ENCODE measurements at regions of chr12 and their contacts with region 1.

Region 1: DNA sequence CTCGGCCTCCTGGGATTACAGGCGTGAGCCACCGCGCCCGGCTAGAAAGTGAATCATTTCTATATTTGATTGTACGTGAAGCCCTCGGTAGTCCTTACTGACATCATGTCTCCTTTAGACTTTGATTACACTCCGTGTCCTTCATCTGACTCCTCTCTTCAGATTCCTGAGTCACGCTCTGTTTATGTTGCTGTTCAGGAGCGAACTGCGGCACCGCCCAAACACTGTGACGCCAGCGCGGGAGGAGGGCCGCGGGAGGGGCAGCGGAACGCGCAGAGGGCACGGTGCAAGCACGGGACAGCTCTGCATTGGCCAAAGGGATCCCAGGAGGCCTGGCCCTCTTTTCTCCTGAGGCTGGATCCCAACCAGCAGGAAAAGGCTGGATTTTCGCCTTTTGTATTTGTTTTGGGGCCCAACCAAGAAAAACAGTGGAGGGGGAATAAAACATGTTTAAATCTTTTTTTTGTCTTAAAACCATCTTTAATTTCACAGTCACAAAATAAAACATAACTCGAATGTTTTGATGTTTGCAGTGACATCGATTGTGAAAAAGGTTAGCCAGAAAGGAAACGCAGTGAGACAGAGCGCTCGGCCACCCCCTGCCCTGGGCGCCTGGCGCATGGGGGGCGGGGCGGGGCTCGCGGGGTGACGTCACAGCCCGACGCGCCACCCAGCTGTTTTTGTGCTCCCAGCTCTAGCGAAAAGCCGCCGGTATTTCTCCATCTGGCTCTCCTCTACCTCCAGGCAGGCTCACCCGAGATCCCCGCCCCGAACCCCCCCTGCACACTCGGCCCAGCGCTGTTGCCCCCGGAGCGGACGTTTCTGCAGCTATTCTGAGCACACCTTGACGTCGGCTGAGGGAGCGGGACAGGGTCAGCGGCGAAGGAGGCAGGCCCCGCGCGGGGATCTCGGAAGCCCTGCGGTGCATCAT is at the start of gene GABARAPL1:
- DNase-seq: peak; percentile 100
- ATAC-seq: peak; percentile 90
- H3K4me3 ChIP-seq: peak within 1 kb of the TSS; percentile 89
- H3K27ac ChIP-seq: peak within 1 kb of the TSS; percentile 98
- H3K4me1 ChIP-seq: peaks cover 3% of the 10 kb centered on the region; the same call in 1 of the 2 replicates
- H3K27me3 ChIP-seq: no peaks in the 10 kb centered on the region
- CTCF ChIP-seq: no peak
- POLR2A ChIP-seq: peak; percentile 88
- RAD21 ChIP-seq: no peak; the same call in 1 of the 2 replicates
- total RNA-seq, gene GABARAPL1: 51.6 and 63.0 TPM in 2 replicates

Region 2: DNA sequence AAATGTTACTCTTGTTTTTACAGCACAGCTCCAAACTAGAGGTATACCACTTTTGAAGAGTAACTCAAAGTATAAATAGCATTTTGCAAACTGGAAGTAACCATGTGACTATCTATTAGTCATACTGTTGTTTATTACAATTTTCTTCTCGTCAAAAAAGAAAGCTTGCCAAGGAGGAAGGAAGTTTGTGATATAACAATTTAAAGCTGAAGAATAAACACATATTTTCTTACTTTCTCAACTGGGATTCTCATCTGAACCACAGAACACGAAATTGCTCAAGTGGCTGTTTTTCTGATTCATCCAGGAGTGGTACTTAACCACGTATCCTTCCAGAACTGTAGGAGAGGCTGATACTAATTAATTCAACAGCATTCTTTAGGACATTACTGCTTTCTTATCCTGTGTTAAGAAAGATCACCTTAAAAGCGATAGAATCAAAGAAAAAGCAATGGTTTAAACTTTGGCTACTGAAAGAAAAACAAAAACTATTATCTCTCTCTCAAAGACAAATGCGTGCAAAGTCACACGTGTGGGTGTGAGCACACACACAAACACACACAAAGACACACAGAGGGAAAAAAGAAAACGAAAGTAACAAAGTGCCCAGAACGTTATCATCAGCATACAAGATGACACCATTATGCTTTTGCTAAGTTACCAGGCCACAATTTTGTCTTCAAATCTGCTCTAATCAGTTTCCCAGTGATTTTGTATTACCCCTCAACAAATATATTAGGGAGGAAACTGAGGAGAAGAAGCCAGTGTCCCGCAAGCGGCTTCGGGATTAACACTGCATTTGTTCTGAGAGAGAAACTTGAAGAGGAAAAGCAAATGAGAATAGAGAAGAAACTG is 342.9 kb before region 1 on chr12 and contains the start of gene CLEC2B:
- CTCF ChIA-PET with region 1: no interaction called
- POLR2A ChIA-PET with region 1: no interaction called
- dilution Hi-C with region 1: no loop called
- in situ Hi-C with region 1: no loop called
- intact Hi-C with region 1: loop called (anchors 5 kb)
- DNase-seq: peak; percentile 85
- ATAC-seq: peak; percentile 90
- H3K4me3 ChIP-seq: peak within 1 kb of the TSS; percentile 69
- H3K27ac ChIP-seq: peak within 1 kb of the TSS; percentile 85; the same call in 1 of the 2 replicates
- H3K4me1 ChIP-seq: peaks cover 2% of the 10 kb centered on the region; the same call in 1 of the 2 replicates
- H3K27me3 ChIP-seq: no peaks in the 10 kb centered on the region
- CTCF ChIP-seq: no peak
- POLR2A ChIP-seq: no peak
- RAD21 ChIP-seq: no peak
- total RNA-seq, gene CLEC2B: 0.18 and 0.56 TPM in 2 replicates

Region 3: GRCh38 chr12:10033783-10034545 is 178.5 kb before region 1 on chr12:
- CTCF ChIA-PET with region 1: no interaction called
- POLR2A ChIA-PET with region 1: no interaction called
- dilution Hi-C with region 1: no loop called
- in situ Hi-C with region 1: no loop called
- intact Hi-C with region 1: loop called (anchors 1 kb)
- DNase-seq: peak; percentile 18
- ATAC-seq: peak; percentile 50
- H3K4me3 ChIP-seq: no peak overlapping the region
- H3K27ac ChIP-seq: no peak overlapping the region
- H3K4me1 ChIP-seq: no peaks in the 10 kb centered on the region
- H3K27me3 ChIP-seq: no peaks in the 10 kb centered on the region
- CTCF ChIP-seq: peak; percentile 72
- POLR2A ChIP-seq: no peak
- RAD21 ChIP-seq: peak; percentile 72

Region 4: DNA sequence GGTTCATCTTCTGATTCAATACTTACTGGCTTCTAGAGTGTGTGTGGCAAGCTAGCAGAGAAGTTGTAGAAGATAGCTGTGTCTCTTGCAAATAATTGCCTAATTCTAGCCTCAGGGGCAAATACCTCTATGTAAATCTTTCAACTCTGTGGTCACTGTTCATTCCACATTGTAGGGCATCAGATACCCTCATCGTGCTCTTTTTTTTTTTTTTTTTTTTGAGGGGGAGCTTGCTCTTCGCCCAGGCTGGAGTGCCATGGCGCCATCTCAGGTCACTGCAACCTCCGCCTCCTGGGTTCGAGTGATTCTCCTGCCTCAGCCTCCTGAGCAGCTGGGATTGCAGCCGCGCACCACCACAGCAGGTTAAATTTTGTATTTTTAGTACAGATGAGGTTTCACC is 42.2 kb before region 1 on chr12:
- CTCF ChIA-PET with region 1: no interaction called
- POLR2A ChIA-PET with region 1: interaction called, 23 read pairs
- dilution Hi-C with region 1: no loop called
- in situ Hi-C with region 1: no loop called
- intact Hi-C with region 1: no loop called
- DNase-seq: no peak
- ATAC-seq: no peak
- H3K4me3 ChIP-seq: no peak overlapping the region
- H3K27ac ChIP-seq: peak overlapping the region; percentile 52; the same call in 1 of the 2 replicates
- H3K4me1 ChIP-seq: peaks cover 12% of the 10 kb centered on the region
- H3K27me3 ChIP-seq: no peaks in the 10 kb centered on the region
- CTCF ChIP-seq: no peak
- POLR2A ChIP-seq: no peak
- RAD21 ChIP-seq: no peak

Region 5: GRCh38 chr12:10190558-10191388 is 21.7 kb before region 1 on chr12:
- CTCF ChIA-PET with region 1: interaction called, 10 read pairs
- POLR2A ChIA-PET with region 1: interaction called, 10 read pairs
- dilution Hi-C with region 1: no loop called
- in situ Hi-C with region 1: no loop called
- intact Hi-C with region 1: loop called (anchors 1 kb)
- DNase-seq: peak; percentile 77
- ATAC-seq: peak; percentile 87
- H3K4me3 ChIP-seq: no peak overlapping the region
- H3K27ac ChIP-seq: peak overlapping the region; percentile 34; the same call in 1 of the 2 replicates
- H3K4me1 ChIP-seq: peaks cover 12% of the 10 kb centered on the region
- H3K27me3 ChIP-seq: no peaks in the 10 kb centered on the region
- CTCF ChIP-seq: peak; percentile 85
- POLR2A ChIP-seq: no peak
- RAD21 ChIP-seq: peak; percentile 87

Region 6: DNA sequence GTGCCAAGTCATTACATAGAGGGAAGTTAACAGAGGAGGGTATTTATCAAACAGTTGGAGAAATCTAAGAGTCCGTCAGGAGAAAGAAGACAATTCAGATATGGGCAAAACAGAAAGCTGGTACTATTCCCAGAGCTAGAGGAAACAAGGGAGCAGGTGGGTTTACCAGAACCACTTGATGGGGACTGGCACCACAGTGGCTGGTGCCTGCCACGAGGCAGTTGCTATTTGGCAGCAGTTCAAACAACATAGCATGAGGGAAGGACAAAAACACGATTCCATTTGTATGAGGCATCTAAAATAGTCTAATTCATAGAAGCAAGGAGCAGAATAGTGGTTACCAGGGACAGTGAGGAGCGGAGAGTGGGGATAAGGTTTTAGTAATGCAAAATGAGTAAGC is 70.6 kb after region 1 on chr12:
- CTCF ChIA-PET with region 1: no interaction called
- POLR2A ChIA-PET with region 1: no interaction called
- dilution Hi-C with region 1: no loop called
- in situ Hi-C with region 1: no loop called
- intact Hi-C with region 1: no loop called
- DNase-seq: no peak
- ATAC-seq: no peak
- H3K4me3 ChIP-seq: no peak overlapping the region
- H3K27ac ChIP-seq: no peak overlapping the region
- H3K4me1 ChIP-seq: no peaks in the 10 kb centered on the region
- H3K27me3 ChIP-seq: peaks cover 6% of the 10 kb centered on the region; the same call in 1 of the 2 replicates
- CTCF ChIP-seq: no peak
- POLR2A ChIP-seq: no peak
- RAD21 ChIP-seq: no peak

Region 7: GRCh38 chr12:10293570-10294227 is 81.2 kb after region 1 on chr12:
- CTCF ChIA-PET with region 1: no interaction called
- POLR2A ChIA-PET with region 1: no interaction called
- dilution Hi-C with region 1: no loop called
- in situ Hi-C with region 1: no loop called
- intact Hi-C with region 1: no loop called
- DNase-seq: no peak
- ATAC-seq: no peak
- H3K4me3 ChIP-seq: no peak overlapping the region
- H3K27ac ChIP-seq: no peak overlapping the region
- H3K4me1 ChIP-seq: no peaks in the 10 kb centered on the region
- H3K27me3 ChIP-seq: peaks cover 17% of the 10 kb centered on the region
- CTCF ChIP-seq: no peak
- POLR2A ChIP-seq: no peak
- RAD21 ChIP-seq: no peak

Region 8: DNA sequence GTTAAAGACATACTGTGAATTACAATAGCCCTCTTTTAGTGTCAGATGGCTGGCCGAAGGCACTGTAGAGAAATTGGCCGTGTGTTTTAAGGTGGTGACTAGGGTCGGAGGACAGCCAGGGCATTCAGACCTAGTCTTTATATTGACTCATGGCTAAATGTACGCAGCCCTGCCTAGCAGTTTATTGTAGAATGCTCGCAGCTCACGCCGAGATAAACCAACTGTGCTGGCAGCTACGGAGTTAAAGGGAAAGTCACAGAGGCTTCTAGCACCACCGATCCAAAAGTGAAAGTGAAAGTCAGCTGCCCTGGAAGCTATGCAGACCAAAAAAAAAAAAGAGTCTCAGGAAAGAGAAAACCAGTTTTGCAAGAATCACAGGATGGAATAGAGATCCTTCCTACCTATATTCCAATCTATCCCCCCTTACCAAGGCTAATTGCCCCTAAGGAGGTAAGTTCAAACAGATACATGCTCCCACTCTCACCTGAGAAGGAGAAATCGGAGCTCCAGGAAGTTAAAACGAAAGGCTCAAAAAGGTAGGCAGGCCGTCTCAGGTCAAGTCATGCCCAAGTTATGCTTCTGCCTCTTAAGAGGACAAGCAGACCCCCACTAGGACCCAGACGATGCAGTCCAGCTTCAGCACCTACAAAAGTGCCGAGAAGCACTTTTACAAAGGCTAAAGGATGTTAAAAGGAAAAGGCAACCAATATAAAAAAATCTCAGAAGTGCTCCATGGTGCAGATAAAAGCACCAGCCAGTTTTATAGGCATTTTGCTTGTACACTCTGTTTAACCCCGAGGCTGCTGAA is 152.6 kb after region 1 on chr12:
- CTCF ChIA-PET with region 1: interaction called, 3 read pairs
- POLR2A ChIA-PET with region 1: no interaction called
- dilution Hi-C with region 1: no loop called
- in situ Hi-C with region 1: no loop called
- intact Hi-C with region 1: loop called (anchors 1 kb)
- DNase-seq: peak; percentile 84
- ATAC-seq: peak; percentile 58
- H3K4me3 ChIP-seq: peak overlapping the region; percentile 54
- H3K27ac ChIP-seq: peak overlapping the region; percentile 92
- H3K4me1 ChIP-seq: peaks cover 22% of the 10 kb centered on the region
- H3K27me3 ChIP-seq: no peaks in the 10 kb centered on the region
- CTCF ChIP-seq: no peak
- POLR2A ChIP-seq: no peak
- RAD21 ChIP-seq: no peak; the same call in 1 of the 2 replicates

Region 9: GRCh38 chr12:10540776-10541205 is 328.3 kb after region 1 on chr12:
- CTCF ChIA-PET with region 1: no interaction called
- POLR2A ChIA-PET with region 1: no interaction called
- dilution Hi-C with region 1: no loop called
- in situ Hi-C with region 1: no loop called
- intact Hi-C with region 1: no loop called
- DNase-seq: no peak
- ATAC-seq: no peak
- H3K4me3 ChIP-seq: no peak overlapping the region
- H3K27ac ChIP-seq: no peak overlapping the region
- H3K4me1 ChIP-seq: no peaks in the 10 kb centered on the region
- H3K27me3 ChIP-seq: no peaks in the 10 kb centered on the region; the same call in 1 of the 2 replicates
- CTCF ChIP-seq: no peak
- POLR2A ChIP-seq: no peak
- RAD21 ChIP-seq: no peak